Caco-2 (cell line): ENCODE measurements at regions of chr9 and their contacts with region 1.

Region 1: DNA sequence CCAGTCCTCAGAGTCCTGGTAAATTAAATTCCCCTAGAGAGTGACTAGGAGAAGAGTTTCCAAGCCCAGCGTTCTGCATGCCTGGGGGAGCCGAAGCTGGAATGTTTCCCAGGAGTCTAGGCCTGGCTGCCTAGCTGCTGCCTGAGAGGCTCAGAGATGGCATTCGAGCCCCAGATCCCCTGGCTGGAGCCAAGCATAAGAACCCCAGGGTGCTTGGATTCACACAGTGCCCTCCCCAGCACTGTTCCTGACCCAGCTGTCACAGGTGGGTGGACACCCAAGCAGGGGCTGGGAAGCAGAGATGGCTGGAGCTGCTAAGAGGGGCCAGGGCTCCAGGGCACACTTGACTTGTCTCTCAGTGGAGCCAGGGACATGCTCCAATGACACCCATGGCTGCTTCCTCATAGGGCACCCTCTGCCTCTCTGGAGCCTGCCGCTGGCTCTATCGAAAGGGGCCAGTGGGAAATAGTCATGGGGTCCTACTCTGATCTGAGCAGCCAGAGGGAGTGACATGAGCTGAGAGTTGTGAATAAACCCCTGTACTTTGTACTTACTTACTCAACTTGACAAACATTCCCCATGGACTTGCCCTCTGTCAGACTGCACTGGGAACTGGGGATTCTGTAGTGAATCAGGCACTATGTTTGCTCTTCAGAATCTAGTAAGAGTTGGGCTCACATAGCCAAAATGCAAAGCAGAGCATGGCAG is 62.6 kb upstream of the XPA start:
- DNase-seq: peak; percentile 74 to 77
- H3K4me3 ChIP-seq: no peak overlapping the region
- H3K4me3 Mint-ChIP-seq: peak overlapping the region; percentile 24
- H3K27ac Mint-ChIP-seq: peak overlapping the region; percentile 56
- H3K4me1 ChIP-seq: peaks cover 43% of the 10 kb centered on the region
- H3K4me1 Mint-ChIP-seq: peaks cover 36% of the 10 kb centered on the region
- H3K27me3 ChIP-seq: no peaks in the 10 kb centered on the region
- H3K27me3 Mint-ChIP-seq: no peaks in the 10 kb centered on the region
- CTCF ChIP-seq: peak in 1 of 2 experiments; percentile 18

Region 2: GRCh38 chr9:97737429-97737828 is 22.3 kb before region 1 on chr9:
- CTCF ChIA-PET with region 1: no interaction called
- POLR2A ChIA-PET with region 1: no interaction called
- intact Hi-C with region 1: loop called (anchors 1 kb)
- DNase-seq: peak; percentile 21 to 65
- H3K4me3 ChIP-seq: no peak overlapping the region
- H3K4me3 Mint-ChIP-seq: no peak overlapping the region
- H3K27ac Mint-ChIP-seq: no peak overlapping the region
- H3K4me1 ChIP-seq: peaks cover 39% of the 10 kb centered on the region
- H3K4me1 Mint-ChIP-seq: peaks cover 8% of the 10 kb centered on the region
- H3K27me3 ChIP-seq: no peaks in the 10 kb centered on the region
- H3K27me3 Mint-ChIP-seq: no peaks in the 10 kb centered on the region
- CTCF ChIP-seq: no peak

Region 3: GRCh38 chr9:97747201-97747965 is 12.4 kb before region 1 on chr9:
- CTCF ChIA-PET with region 1: interaction called, 4 read pairs
- POLR2A ChIA-PET with region 1: interaction called, 22 read pairs
- intact Hi-C with region 1: loop called (anchors 1 kb)
- DNase-seq: peak; percentile 84 to 88
- H3K4me3 ChIP-seq: no peak overlapping the region
- H3K4me3 Mint-ChIP-seq: peak overlapping the region; percentile 71
- H3K27ac Mint-ChIP-seq: peak overlapping the region; percentile 85
- H3K4me1 ChIP-seq: peaks cover 81% of the 10 kb centered on the region
- H3K4me1 Mint-ChIP-seq: peaks cover 65% of the 10 kb centered on the region
- H3K27me3 ChIP-seq: no peaks in the 10 kb centered on the region
- H3K27me3 Mint-ChIP-seq: no peaks in the 10 kb centered on the region
- CTCF ChIP-seq: no peak

Region 4: GRCh38 chr9:97773723-97774122 is 14.0 kb after region 1 on chr9:
- CTCF ChIA-PET with region 1: no interaction called
- POLR2A ChIA-PET with region 1: no interaction called
- intact Hi-C with region 1: no loop called
- DNase-seq: no peak
- H3K4me3 ChIP-seq: no peak overlapping the region
- H3K4me3 Mint-ChIP-seq: no peak overlapping the region
- H3K27ac Mint-ChIP-seq: no peak overlapping the region
- H3K4me1 ChIP-seq: peaks cover 14% of the 10 kb centered on the region; the same call in 1 of the 2 replicates
- H3K4me1 Mint-ChIP-seq: peaks cover 20% of the 10 kb centered on the region
- H3K27me3 ChIP-seq: no peaks in the 10 kb centered on the region
- H3K27me3 Mint-ChIP-seq: no peaks in the 10 kb centered on the region
- CTCF ChIP-seq: no peak

Region 5: DNA sequence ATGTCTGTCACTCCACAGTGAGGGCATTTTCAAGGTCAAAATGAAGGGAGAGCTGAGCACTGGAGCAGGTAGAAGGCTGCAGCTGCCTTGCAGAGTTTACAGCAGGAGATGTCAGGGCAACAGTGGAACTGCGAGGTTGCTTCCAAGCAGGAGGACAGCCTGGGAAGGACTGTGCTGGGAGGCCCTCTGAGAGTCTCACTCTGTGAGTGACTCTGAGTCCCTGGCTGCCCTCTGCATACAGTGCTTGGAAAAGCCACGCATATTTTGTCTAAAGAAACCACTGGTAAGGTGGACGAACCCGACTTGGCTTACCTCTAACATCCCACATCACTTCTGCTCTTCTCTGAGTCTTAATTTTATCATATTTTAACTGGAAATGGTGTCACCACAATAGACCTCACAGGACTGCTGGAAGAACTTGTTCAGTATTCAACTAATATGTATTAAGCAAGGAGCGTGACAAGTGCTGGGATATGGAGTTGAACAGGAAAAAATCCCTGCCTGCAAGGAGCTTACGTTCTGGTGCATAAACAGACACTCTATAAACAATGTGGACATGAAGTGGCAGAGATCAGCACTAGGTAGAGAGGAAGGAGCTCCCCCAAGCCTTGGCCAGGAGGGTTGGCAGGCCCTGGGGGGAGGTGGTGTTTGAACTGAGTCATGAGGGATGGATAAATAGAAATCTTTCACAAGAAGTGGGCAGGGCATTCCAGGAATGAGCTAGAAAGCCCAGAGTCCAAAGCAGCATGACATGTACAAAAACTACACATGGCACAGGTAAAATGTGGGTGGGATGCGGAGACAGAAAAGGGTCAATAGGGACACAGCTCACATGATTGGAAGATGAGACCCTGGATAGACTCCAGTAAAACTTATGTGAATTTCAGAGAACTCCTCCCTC is 29.3 kb after region 1 on chr9:
- CTCF ChIA-PET with region 1: interaction called, 4 read pairs
- POLR2A ChIA-PET with region 1: no interaction called
- intact Hi-C with region 1: loop called (anchors 1 kb)
- DNase-seq: peak; percentile 56 to 61
- H3K4me3 ChIP-seq: no peak overlapping the region
- H3K4me3 Mint-ChIP-seq: no peak overlapping the region
- H3K27ac Mint-ChIP-seq: peak overlapping the region; percentile 31
- H3K4me1 ChIP-seq: peaks cover 49% of the 10 kb centered on the region
- H3K4me1 Mint-ChIP-seq: peaks cover 12% of the 10 kb centered on the region
- H3K27me3 ChIP-seq: no peaks in the 10 kb centered on the region
- H3K27me3 Mint-ChIP-seq: no peaks in the 10 kb centered on the region
- CTCF ChIP-seq: no peak

Region 6: DNA sequence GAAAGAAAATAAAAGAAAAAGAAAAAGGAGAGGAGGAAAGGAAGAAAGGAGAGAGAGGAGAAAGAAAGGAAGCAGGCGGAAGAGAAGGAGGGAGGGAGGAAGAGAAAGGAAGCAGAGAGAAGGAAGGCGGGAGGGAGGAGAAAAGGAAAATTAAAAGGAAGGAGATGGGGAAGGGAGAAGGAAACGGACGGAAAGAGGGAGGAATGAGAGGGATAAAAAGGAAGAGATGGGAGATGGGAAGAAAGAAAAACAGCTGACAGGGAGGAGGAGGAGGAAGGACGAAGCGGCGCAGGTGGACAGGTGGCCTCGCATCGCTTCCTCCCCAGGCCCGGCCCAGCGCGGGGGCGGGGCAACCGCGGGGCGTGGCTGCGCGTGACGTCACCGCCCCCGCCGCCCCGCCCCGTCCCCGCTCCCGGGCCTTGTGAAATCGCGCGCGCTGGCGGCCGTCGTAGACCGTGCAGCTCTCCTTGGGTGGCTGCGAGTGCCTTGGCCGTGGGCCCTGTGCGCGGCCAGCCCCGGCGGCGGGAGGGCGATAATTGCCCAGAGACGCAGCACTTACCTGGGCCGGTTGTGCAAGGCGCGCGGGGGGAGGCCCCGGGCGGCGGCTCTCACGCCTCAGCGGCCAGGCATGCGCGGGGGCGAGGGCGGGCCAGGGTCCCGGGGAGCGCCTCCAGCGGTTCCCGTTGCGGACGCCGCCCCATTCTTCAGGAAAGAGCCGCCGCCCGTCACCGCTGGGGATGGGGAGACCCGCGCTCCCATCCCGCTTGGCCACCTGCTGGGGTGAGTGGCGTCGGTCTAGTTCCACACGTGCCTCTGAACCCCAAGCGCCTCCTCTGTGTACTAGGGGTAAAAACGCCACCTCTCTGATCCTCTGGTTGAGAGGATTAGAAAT is 43.7 kb after region 1 on chr9:
- CTCF ChIA-PET with region 1: no interaction called
- POLR2A ChIA-PET with region 1: interaction called, 4 read pairs
- intact Hi-C with region 1: loop called (anchors 2 kb)
- DNase-seq: peak; percentile 88 to 91
- H3K4me3 ChIP-seq: peak overlapping the region; percentile 66
- H3K4me3 Mint-ChIP-seq: peak overlapping the region; percentile 82
- H3K27ac Mint-ChIP-seq: peak overlapping the region; percentile 92
- H3K4me1 ChIP-seq: peaks cover 42% of the 10 kb centered on the region
- H3K4me1 Mint-ChIP-seq: peaks cover 39% of the 10 kb centered on the region
- H3K27me3 ChIP-seq: no peaks in the 10 kb centered on the region
- H3K27me3 Mint-ChIP-seq: no peaks in the 10 kb centered on the region
- CTCF ChIP-seq: peak; percentile 29 to 36